Activated T-helper 2 cell treated with anti-CD3 and anti-CD28 coated beads, Interferon-gamma antibody, Interleukin-2, Interleukin-4, amounts not matched to agents 10 μg/mL and 5 μg/mL and 100 μg/mL, durations not matched to agents 14 hours and 24 hours and 36 hours (primary cell): ENCODE measurements at regions of chr6 and their contacts with region 1.

Region 1: DNA sequence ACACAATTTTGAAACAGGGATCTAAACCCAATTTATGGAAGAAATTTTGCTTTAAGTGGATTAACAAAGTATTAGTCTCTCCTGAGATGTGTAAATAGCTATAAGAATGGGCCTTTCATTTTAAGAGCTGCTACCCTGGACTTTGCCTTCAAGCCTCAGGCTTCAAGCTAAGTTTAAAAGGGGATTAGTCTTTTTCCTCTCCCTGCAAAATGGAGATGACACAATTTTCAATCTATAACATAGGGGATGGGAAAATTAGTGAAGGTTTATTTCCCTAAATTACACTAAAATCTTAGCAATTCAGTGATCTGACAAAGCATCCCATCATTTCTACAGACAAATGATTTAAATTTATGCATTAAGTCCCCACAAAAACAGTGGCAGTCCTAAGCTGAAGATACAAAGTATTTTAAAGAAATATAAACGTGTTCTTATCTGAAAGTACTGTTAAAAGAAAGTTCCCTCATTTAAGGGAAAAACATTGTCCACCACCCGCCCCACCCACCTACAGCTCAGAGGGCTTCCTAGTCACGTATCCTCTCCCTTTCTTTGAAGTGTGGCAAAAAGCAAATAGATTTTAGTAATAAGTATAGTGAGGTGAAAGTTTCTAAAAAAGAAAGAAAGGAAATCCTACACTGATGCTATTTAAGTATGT is 14.5 kb downstream of the ARHGAP18 start:
- DNase-seq: no peak
- H3K4me3 Mint-ChIP-seq: peak overlapping the region; percentile 27
- H3K27ac Mint-ChIP-seq: peak overlapping the region; percentile 74
- H3K4me1 Mint-ChIP-seq: peaks cover 63% of the 10 kb centered on the region
- H3K27me3 Mint-ChIP-seq: no peaks in the 10 kb centered on the region

Region 2: DNA sequence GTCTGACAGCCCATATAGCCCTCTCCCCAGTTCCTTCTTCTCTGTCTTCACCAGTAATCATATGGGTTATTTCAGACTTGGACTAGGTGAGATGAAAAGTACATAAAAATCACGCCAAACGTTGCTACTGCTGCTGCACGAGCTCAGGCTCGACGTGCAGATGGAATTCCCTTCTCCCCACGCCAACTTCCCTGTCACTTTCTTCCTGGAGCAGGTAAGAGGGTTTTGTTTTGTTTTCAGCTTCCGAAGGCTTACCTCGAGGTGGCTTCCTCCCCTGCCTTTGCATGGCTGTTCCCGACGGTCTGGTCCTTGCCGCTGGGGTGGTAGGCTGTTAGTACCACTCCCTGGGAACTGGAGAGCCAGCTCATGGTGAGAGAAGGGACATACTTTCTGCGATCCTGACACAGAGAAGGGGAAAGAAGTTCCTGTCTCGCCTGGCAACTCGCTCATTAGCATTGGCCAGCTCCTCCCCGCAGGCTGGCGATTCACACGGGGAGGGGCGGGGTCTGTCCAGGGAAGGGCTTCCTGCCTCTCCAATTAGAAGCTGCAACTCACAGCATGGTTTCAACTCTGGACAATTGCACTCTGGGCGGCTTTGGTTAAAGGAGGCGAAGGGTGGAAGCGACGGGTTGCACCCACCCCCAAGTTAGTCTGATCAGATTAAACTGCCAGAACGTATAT is 14.4 kb after region 1 on chr6 and contains the start of gene ARHGAP18:
- intact Hi-C with region 1: loop called (anchors 2 kb)
- DNase-seq: peak; percentile 71
- H3K4me3 Mint-ChIP-seq: peak within 1 kb of the TSS; percentile 93
- H3K27ac Mint-ChIP-seq: peak within 1 kb of the TSS; percentile 87
- H3K4me1 Mint-ChIP-seq: peaks cover 54% of the 10 kb centered on the region
- H3K27me3 Mint-ChIP-seq: no peaks in the 10 kb centered on the region
- total RNA-seq, gene ARHGAP18: 5.9 and 6.6 TPM in 2 replicates

Region 3: GRCh38 chr6:129766959-129767728 is 71.6 kb after region 1 on chr6:
- intact Hi-C with region 1: no loop called
- DNase-seq: peak; percentile 68
- H3K4me3 Mint-ChIP-seq: peak overlapping the region; percentile 81
- H3K27ac Mint-ChIP-seq: no peak overlapping the region
- H3K4me1 Mint-ChIP-seq: peaks cover 27% of the 10 kb centered on the region
- H3K27me3 Mint-ChIP-seq: peaks cover 64% of the 10 kb centered on the region